K562 (cell line): ENCODE measurements at regions of chr2 and their contacts with region 1.

Region 1: GRCh38 chr2:147937744-147938349 is 82.7 kb downstream of the ORC4 start:
- DNase-seq: peak; percentile 17 to 47 (median 42)
- ATAC-seq: peak; percentile 82
- H3K4me3 ChIP-seq: no peak overlapping the region
- H3K27ac ChIP-seq: no peak overlapping the region
- H3K4me1 ChIP-seq: no peaks in the 10 kb centered on the region
- H3K27me3 ChIP-seq: no peaks in the 10 kb centered on the region
- CTCF ChIP-seq: peak; percentile 33 to 80 (median 66); a peak in 5 of 6 replicates
- EP300 ChIP-seq: no peak
- POLR2A ChIP-seq: no peak
- RAD21 ChIP-seq: peak; percentile 76 to 81

Region 2: DNA sequence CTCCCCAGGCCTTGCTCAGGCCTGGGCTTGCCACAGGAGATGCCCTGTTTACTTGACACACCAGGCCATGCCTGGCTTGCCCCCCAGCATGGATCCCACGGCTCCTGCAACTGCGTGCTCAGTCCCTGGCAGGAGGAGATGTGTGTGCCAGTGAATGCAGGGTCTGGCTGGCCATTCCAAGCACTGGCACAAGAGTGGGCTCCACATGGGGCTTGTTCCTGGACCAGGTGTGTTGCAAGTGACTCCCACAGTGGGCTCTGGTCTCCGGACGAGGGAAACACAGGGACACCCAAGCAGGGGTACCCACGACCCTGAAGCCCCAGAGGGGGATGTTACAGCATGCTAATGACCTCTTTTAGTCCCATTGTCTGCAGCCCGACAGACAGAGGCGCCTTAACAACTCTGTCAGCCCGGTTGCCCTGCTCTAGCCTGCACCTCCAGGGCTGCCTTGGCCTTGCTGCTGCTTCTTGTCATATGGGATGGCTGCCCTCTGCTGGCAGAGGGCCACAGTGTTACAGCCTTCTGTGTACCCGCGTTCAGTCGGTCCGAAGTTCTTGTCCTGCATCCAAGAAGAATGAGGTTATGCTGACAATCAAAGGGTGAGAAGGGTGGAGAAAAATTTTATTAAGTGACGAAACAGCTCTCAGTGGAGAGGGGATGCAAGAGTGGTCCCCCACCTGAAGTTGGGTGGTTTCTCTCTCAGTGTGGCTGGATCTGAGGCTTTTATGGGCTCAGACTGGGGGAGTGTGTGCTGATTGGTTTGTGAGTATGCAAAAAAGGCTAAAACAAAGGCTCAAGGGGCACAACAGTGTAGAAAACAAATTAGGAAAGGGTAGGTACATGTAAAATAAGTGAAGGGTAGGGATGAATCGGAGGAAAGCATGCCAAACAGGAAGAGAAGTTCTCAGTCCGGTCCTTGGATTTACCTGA is 263.5 kb after region 1 on chr2:
- CTCF ChIA-PET with region 1: interaction called, 5 read pairs
- POLR2A ChIA-PET with region 1: no interaction called
- in situ Hi-C with region 1: no loop called
- intact Hi-C with region 1: loop called (anchors 5 kb)
- DNase-seq: peak; percentile 25 to 80 (median 32)
- ATAC-seq: peak; percentile 100
- H3K4me3 ChIP-seq: no peak overlapping the region
- H3K27ac ChIP-seq: no peak overlapping the region
- H3K4me1 ChIP-seq: no peaks in the 10 kb centered on the region; a peak in 1 of 5 replicates
- H3K27me3 ChIP-seq: no peaks in the 10 kb centered on the region
- CTCF ChIP-seq: peak; percentile 70 to 87 (median 70)
- EP300 ChIP-seq: no peak
- POLR2A ChIP-seq: no peak
- RAD21 ChIP-seq: peak in 1 of 2 experiments; percentile 72; a peak in 3 of 4 replicates

Region 3: GRCh38 chr2:148244587-148245292 is 306.9 kb after region 1 on chr2:
- CTCF ChIA-PET with region 1: no interaction called
- POLR2A ChIA-PET with region 1: no interaction called
- in situ Hi-C with region 1: no loop called
- intact Hi-C with region 1: no loop called
- DNase-seq: no peak
- ATAC-seq: no peak
- H3K4me3 ChIP-seq: no peak overlapping the region
- H3K27ac ChIP-seq: no peak overlapping the region
- H3K4me1 ChIP-seq: no peaks in the 10 kb centered on the region
- H3K27me3 ChIP-seq: no peaks in the 10 kb centered on the region
- CTCF ChIP-seq: no peak
- EP300 ChIP-seq: no peak
- POLR2A ChIP-seq: no peak
- RAD21 ChIP-seq: no peak

Region 4: DNA sequence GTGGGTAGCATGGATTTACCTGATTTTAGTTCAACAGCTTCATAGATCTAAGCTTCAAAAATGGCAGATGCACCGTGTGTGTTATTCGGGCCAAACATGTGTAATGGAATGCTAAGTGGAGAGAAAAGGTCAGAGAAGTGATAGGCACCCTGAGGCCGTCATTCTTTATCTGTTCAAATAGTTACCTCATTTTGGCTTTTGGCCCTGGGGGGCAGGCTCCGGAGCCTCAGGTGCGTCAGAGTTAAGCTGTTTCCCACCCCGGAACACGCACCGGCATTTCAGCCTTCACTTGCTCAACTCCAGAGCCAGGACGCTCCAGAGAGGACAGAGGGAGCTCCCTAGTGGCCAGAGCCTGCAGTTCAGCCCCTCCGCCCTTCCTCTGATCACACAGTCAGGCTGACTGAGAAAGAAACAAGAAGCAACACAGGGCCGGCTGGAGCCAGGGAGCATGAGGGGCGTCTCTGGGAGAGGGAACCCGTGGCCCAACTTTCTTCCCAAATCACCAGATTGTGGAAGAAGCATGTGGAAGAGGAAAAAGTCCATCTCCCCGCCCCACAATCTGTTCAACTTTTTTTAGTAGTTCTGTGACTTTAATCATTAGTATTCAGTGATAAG is 571.5 kb after region 1 on chr2:
- CTCF ChIA-PET with region 1: interaction called, 5 read pairs
- POLR2A ChIA-PET with region 1: no interaction called
- in situ Hi-C with region 1: loop called (anchors 10 kb)
- intact Hi-C with region 1: loop called (anchors 1 kb)
- DNase-seq: peak; percentile 67 to 87 (median 77)
- ATAC-seq: peak; percentile 100
- H3K4me3 ChIP-seq: peak overlapping the region; percentile 31
- H3K27ac ChIP-seq: no peak overlapping the region
- H3K4me1 ChIP-seq: peaks cover 0 to 5% of the 10 kb centered on the region in 2 experiments; a peak in 1 of 5 replicates
- H3K27me3 ChIP-seq: peaks cover 0 to 1% of the 10 kb centered on the region in 2 experiments; a peak in 1 of 5 replicates
- CTCF ChIP-seq: peak; percentile 88 to 94 (median 91)
- EP300 ChIP-seq: no peak
- POLR2A ChIP-seq: no peak
- RAD21 ChIP-seq: peak; percentile 93 to 96

Region 5: DNA sequence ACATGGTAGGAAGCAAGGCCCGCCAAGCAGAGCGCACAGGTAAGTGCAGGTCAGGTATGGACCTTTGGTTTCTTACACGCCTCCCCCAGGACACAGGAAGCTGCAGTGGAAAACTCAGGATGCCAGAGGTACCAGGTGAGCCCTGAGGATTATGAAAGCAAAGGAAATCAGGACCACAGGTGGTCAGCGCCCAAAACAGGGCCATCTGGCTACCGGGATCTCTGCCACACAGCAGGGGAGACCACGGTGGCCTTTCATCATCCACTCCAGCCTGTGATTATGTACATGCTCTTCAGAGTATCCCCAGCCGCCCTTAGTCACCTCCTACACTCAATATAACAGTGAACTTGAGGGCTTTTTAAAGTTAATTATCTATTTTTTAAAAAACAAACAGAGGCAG is 581.2 kb after region 1 on chr2:
- CTCF ChIA-PET with region 1: no interaction called
- POLR2A ChIA-PET with region 1: no interaction called
- in situ Hi-C with region 1: loop called (anchors 10 kb)
- intact Hi-C with region 1: no loop called
- DNase-seq: no peak
- ATAC-seq: no peak
- H3K4me3 ChIP-seq: no peak overlapping the region
- H3K27ac ChIP-seq: no peak overlapping the region
- H3K4me1 ChIP-seq: no peaks in the 10 kb centered on the region
- H3K27me3 ChIP-seq: peaks cover 4 to 24% of the 10 kb centered on the region in 2 experiments; a peak in 4 of 5 replicates
- CTCF ChIP-seq: no peak
- EP300 ChIP-seq: no peak
- POLR2A ChIP-seq: no peak
- RAD21 ChIP-seq: no peak

Region 6: GRCh38 chr2:148989882-148990493 is 1052.1 kb after region 1 on chr2:
- CTCF ChIA-PET with region 1: interaction called, 6 read pairs
- POLR2A ChIA-PET with region 1: no interaction called
- in situ Hi-C with region 1: loop called (anchors 25 kb)
- intact Hi-C with region 1: loop called (anchors 1 kb)
- DNase-seq: peak; percentile 49 to 80 (median 62)
- ATAC-seq: peak; percentile 94
- H3K4me3 ChIP-seq: no peak overlapping the region
- H3K27ac ChIP-seq: no peak overlapping the region
- H3K4me1 ChIP-seq: no peaks in the 10 kb centered on the region
- H3K27me3 ChIP-seq: peaks cover 0 to 6% of the 10 kb centered on the region in 2 experiments; a peak in 1 of 5 replicates
- CTCF ChIP-seq: peak; percentile 75 to 87 (median 80)
- EP300 ChIP-seq: no peak
- POLR2A ChIP-seq: no peak
- RAD21 ChIP-seq: peak; percentile 98